PC-9 (cell line): ENCODE measurements at regions of chr4 and their contacts with region 1.

Region 1: GRCh38 chr4:24657768-24658617 is 73.6 kb upstream of the DHX15 start:
- DNase-seq: peak; percentile 86 to 99
- H3K4me3 ChIP-seq: peak overlapping the region; percentile 45; the same call in 1 of the 2 replicates
- H3K27ac ChIP-seq: peak overlapping the region; percentile 89
- H3K4me1 ChIP-seq: peaks cover 48% of the 10 kb centered on the region
- H3K27me3 ChIP-seq: no peaks in the 10 kb centered on the region
- CTCF ChIP-seq: no peak

Region 2: GRCh38 chr4:23333946-23334878 is 1323.8 kb before region 1 on chr4:
- CTCF ChIA-PET with region 1: no interaction called
- POLR2A ChIA-PET with region 1: interaction called, 17 read pairs
- intact Hi-C with region 1: no loop called
- DNase-seq: peak; percentile 22 to 75
- H3K4me3 ChIP-seq: no peak overlapping the region
- H3K27ac ChIP-seq: peak overlapping the region; percentile 1; the same call in 1 of the 2 replicates
- H3K4me1 ChIP-seq: peaks cover 9% of the 10 kb centered on the region
- H3K27me3 ChIP-seq: no peaks in the 10 kb centered on the region
- CTCF ChIP-seq: no peak

Region 3: DNA sequence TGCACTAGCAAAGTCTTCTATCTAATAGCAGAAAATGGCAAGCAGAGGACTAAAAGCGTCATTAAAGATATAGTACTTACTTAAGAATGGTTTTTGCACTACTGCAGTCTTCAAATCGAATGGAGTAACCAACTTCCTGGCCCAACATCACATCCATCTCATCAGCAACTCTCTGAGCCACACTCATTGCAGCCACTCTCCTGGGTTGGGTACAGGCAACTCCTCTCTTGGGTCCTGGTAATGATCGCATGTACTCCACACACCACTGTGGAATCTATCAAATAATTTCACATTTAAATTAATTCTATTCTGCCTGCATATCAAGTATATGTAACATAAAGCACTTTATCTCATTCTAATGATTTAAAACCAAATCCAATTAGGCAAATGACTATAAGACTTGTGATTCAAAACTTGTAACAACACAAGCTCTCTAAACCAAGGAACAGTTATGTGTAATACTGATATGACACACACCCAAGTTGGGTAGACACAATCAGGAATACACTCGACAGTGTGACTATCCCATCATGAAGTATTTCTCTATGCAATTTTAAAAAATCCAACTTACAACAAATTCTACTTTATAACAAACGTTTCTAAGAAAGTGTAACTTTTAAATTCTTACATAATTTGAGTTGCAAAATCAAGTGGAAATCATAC is 87.3 kb before region 1 on chr4:
- CTCF ChIA-PET with region 1: no interaction called
- POLR2A ChIA-PET with region 1: interaction called, 12 read pairs
- intact Hi-C with region 1: no loop called
- DNase-seq: no peak
- H3K4me3 ChIP-seq: no peak overlapping the region
- H3K27ac ChIP-seq: no peak overlapping the region; the same call in 1 of the 2 replicates
- H3K4me1 ChIP-seq: no peaks in the 10 kb centered on the region
- H3K27me3 ChIP-seq: no peaks in the 10 kb centered on the region
- CTCF ChIP-seq: no peak

Region 4: DNA sequence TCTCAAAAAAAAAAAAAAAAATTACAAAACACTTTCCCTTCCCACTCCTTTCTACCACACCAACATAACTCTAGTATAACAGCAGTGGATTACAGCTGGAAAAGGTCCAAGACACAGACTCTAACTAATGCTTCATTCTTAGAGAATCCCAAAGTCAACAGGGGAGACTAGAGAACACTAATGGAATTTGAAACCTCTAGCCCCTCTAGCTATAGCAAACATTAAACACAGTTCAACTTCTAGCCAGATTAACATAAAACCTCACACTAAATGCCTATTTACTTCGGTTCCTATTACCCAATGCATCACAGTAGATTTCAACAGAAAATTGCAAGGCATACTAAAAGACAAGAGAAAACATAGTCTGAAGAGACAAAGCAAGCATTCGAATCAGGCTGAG is 63.1 kb before region 1 on chr4:
- CTCF ChIA-PET with region 1: no interaction called
- POLR2A ChIA-PET with region 1: interaction called, 6 read pairs
- intact Hi-C with region 1: loop called (anchors 1 kb)
- DNase-seq: peak in 1 of 2 experiments; percentile 94
- H3K4me3 ChIP-seq: peak overlapping the region; percentile 19; the same call in 1 of the 2 replicates
- H3K27ac ChIP-seq: peak overlapping the region; percentile 98
- H3K4me1 ChIP-seq: peaks cover 53% of the 10 kb centered on the region
- H3K27me3 ChIP-seq: no peaks in the 10 kb centered on the region
- CTCF ChIP-seq: no peak

Region 5: DNA sequence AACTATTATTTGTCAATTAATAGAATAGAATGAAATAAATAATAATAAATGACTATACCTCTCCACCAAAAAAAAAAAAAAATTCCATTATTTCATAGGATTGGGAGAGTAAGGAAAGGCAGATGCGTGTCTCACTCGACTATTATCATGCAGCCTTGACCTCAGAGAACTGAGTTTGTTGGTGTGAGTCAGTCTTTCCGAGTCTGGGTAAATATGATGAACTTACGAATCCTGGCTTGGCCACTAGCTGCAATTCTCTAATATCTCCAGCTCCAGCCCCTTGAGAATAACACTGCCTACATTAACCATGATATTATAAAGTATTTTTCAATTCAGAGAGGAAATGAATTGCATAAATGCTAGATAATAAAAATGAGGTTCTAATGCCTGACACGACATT is 27.1 kb before region 1 on chr4:
- CTCF ChIA-PET with region 1: interaction called, 15 read pairs
- POLR2A ChIA-PET with region 1: no interaction called
- intact Hi-C with region 1: no loop called
- DNase-seq: no peak
- H3K4me3 ChIP-seq: no peak overlapping the region
- H3K27ac ChIP-seq: no peak overlapping the region
- H3K4me1 ChIP-seq: peaks cover 17% of the 10 kb centered on the region
- H3K27me3 ChIP-seq: no peaks in the 10 kb centered on the region
- CTCF ChIP-seq: no peak

Region 6: GRCh38 chr4:24753500-24753899 is 95.5 kb after region 1 on chr4:
- CTCF ChIA-PET with region 1: no interaction called
- POLR2A ChIA-PET with region 1: no interaction called
- intact Hi-C with region 1: loop called (anchors 1 kb)
- DNase-seq: peak; percentile 70 to 99
- H3K4me3 ChIP-seq: no peak overlapping the region
- H3K27ac ChIP-seq: peak overlapping the region; percentile 95
- H3K4me1 ChIP-seq: peaks cover 24% of the 10 kb centered on the region
- H3K27me3 ChIP-seq: no peaks in the 10 kb centered on the region
- CTCF ChIP-seq: no peak